Panc1 (cell line): ENCODE measurements at regions of chr17 and their contacts with region 1.

Region 1: DNA sequence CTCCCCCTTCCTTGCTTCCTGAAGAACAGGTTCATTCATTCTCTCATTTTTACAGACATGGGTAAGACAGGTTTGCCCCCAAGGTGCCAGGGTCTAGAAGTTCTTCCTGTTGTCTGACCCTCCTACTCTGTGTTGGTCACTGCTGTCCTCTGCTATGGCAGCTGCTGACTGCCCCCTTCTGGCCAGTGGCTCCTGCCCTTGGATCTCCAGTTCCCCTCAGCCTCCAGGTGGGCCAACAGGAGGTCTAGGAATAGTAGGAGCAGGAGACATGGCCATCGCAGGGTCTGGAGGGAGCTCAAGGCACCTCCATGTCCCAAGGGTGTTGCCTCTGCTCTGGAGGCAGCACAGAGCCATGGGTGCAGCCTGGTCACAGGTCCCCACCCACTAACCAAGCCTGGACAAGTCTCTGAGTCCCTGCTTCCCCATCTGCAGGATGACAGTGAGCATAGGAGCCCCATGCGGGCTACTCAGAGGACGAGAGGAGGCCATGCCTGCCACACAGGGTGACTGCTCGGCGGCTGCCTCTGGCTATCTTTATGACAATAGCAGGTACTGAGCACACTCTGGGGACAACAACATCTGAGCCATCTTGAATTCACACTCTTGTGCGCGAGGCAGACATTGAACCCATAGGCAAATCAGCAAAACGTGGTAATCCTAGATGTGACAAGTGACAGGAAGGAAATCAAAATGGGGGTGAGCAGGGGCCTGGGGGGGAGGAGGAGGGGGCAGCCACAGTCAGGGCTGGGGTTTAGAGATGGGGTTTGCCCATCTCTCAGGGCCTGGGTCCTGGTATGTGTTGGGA is 27.0 kb upstream of the NXPH3 start:
- DNase-seq: no peak
- ATAC-seq: peak; percentile 83
- H3K4me3 ChIP-seq: no peak overlapping the region
- H3K27ac ChIP-seq: no peak overlapping the region
- H3K4me1 ChIP-seq: no peaks in the 10 kb centered on the region
- H3K27me3 ChIP-seq: no peaks in the 10 kb centered on the region
- CTCF ChIP-seq: peak; percentile 86

Region 2: GRCh38 chr17:48603959-48604769 is 944.5 kb before region 1 on chr17:
- CTCF ChIA-PET with region 1: no interaction called
- POLR2A ChIA-PET with region 1: no interaction called
- in situ Hi-C with region 1: no loop called
- intact Hi-C with region 1: loop called (anchors 5 kb)
- DNase-seq: no peak
- ATAC-seq: peak; percentile 57
- H3K4me3 ChIP-seq: peak overlapping the region; percentile 70 to 99
- H3K27ac ChIP-seq: peak overlapping the region; percentile 99
- H3K4me1 ChIP-seq: peaks cover 57% of the 10 kb centered on the region
- H3K27me3 ChIP-seq: no peaks in the 10 kb centered on the region
- CTCF ChIP-seq: no peak

Region 3: GRCh38 chr17:49496183-49496866 is 52.4 kb before region 1 on chr17:
- CTCF ChIA-PET with region 1: no interaction called
- POLR2A ChIA-PET with region 1: no interaction called
- in situ Hi-C with region 1: no loop called
- intact Hi-C with region 1: loop called (anchors 5 kb)
- DNase-seq: no peak
- ATAC-seq: peak; percentile 82
- H3K4me3 ChIP-seq: peak overlapping the region; percentile 41 to 56
- H3K27ac ChIP-seq: no peak overlapping the region
- H3K4me1 ChIP-seq: peaks cover 13% of the 10 kb centered on the region
- H3K27me3 ChIP-seq: peaks cover 26% of the 10 kb centered on the region
- CTCF ChIP-seq: peak; percentile 98